H1 (cell line): ENCODE measurements at regions of chr2 and their contacts with region 1.

Region 1: GRCh38 chr2:99337113-99338028 is at the start of gene EIF5B:
- DNase-seq: peak; percentile 82 to 92
- H3K4me3 ChIP-seq: peak within 1 kb of the TSS; percentile 77 to 96 (median 87)
- H3K27ac ChIP-seq: no peak within 1 kb of the TSS; the same call in 1 of the 2 replicates
- H3K4me1 ChIP-seq: peaks cover 0 to 4% (median 0%) of the 10 kb centered on the region in 4 experiments; a peak in 1 of 7 replicates
- H3K27me3 ChIP-seq: no peaks in the 10 kb centered on the region
- CTCF ChIP-seq: peak; percentile 75 to 79 (median 78)
- EP300 ChIP-seq: no peak
- POLR2A ChIP-seq: peak in 1 of 2 experiments; percentile 68; a peak in 1 of 3 replicates
- RAD21 ChIP-seq: 0 out of 4 replicates have a peak, but pooled peaks of 1 of the 2 experiments have one; percentile 4
- total RNA-seq, gene EIF5B: 62.9 and 64.5 TPM in 2 replicates

Region 2: DNA sequence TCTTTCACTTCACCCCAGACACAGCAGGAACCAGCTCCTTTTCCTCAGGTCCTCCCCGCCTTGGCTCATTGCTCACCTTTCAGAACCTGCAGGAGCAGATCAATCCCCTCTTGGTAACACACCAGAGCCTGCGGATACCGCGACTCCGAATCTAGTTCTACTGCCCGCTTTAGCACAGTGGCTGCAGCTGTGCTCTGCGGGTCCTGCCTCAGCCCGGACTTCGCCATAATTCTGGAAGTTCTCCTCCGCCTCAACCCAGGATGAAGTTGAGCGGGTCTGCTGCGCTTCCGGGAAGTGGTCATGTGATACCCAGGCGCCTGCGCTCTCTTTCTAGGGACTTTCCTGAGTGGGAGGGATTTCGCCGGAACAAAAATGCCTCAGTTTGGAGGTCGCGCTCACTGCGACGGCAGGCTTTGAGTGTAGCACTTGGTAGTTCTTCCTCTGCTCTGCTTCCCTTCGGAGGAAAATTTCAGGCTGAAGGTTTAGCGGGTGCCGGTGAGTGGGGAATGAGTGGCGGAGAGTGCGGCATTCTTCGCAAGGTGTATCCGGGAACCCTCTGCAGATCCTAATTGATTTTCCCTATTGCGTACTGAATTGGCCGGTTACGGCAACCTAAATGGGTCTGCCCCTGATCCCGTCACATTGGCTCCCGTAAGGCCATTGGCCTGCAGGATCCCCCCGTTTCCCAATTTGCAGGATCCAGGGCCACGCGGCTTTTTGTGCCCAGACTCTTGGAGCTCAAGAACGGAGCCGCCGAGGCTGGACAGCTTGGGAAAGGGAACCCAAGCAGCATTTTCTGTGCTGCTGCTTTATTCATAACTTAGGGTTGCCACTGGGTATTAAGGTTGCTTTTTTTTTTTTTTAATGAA is 156.4 kb before region 1 on chr2 and contains the starts of genes MITD1 and MRPL30:
- CTCF ChIA-PET with region 1: interaction called, 7 read pairs
- POLR2A ChIA-PET with region 1: interaction called, 19 read pairs
- DNase-seq: peak; percentile 76 to 86
- H3K4me3 ChIP-seq: peak within 1 kb of the TSS; percentile 81 to 95 (median 89)
- H3K27ac ChIP-seq: peak within 1 kb of the TSS; percentile 81
- H3K4me1 ChIP-seq: peaks cover 0 to 2% (median 0%) of the 10 kb centered on the region in 4 experiments; a peak in 3 of 7 replicates
- H3K27me3 ChIP-seq: no peaks in the 10 kb centered on the region
- CTCF ChIP-seq: no peak
- EP300 ChIP-seq: peak in 1 of 2 experiments; percentile 80; a peak in 1 of 3 replicates
- POLR2A ChIP-seq: peak; percentile 86 to 99
- RAD21 ChIP-seq: no peak
- total RNA-seq, gene MITD1: 31.7 and 36.2 TPM in 2 replicates
- total RNA-seq, gene MRPL30: 43.4 and 46.2 TPM in 2 replicates

Region 3: DNA sequence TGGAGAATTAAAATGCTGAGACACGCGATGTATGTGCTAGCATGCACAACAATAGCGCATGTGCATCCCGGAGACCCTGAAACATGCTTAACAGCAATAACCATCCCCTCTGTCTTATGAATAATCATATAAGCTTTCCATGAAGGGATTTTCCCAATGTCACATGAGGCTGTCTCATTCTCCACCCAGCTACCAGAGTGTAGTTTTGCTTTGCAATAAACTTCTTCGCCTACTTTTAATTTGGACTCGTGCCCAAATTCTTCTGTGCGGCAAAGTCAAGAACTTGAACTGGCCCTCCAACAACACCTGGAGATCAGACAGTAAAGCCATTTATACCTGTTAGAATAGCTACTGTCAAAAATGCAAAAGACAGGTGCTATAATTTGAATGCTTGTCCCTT is 51.8 kb before region 1 on chr2:
- CTCF ChIA-PET with region 1: no interaction called
- POLR2A ChIA-PET with region 1: no interaction called
- DNase-seq: no peak
- H3K4me3 ChIP-seq: no peak overlapping the region
- H3K27ac ChIP-seq: no peak overlapping the region
- H3K4me1 ChIP-seq: peaks cover 0 to 3% (median 0%) of the 10 kb centered on the region in 4 experiments; a peak in 1 of 7 replicates
- H3K27me3 ChIP-seq: no peaks in the 10 kb centered on the region
- CTCF ChIP-seq: no peak
- EP300 ChIP-seq: no peak
- POLR2A ChIP-seq: no peak
- RAD21 ChIP-seq: no peak